Head of caudate nucleus (tissue), 42 donors: ENCODE measurements at regions of chr2 and their contacts with region 1.

Region 1: DNA sequence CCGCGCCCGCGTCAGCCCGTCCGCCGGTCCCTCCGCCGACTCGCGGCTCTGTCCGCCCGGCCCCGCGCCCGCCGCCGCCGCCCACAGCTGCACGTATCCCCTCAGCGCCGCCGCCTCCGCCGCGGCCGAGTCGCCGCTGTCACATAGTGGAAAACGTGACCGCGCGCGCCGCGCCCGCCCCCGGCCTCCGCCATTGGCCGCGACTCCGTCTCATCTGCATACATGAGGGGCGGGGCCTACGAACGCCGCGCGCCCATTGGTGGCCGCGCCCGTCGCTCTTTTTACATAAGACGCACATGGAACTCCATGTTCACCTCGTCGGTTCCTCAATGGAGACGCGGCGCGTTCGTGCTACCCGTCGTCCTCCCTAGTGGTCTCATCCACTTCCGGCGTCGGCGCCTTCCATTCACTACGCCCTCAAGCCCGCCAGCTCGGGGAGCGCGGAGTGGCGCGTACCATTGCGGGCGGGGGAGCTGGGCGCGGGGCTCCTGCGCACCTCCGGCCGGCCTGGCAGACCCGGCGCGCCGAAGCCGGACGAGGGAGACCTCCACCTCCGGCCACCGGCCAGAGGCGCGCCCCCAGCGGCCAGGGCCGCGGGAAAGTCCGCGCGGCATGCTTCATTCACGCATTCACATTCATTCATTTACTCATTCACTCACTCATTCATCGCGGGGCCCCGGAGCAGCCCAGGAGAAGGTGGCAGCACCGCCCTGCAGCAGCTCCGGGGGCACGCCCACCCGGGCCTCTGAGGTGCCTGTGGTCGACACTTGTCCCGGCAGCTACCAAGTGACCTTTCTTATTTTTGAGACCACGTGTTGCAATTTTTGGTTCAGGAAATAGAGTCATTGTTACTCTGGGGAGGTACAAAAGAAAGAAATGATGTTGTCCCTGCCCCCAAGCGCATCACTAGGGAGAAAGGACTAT is 502 bp upstream of the PER2 start:
- DNase-seq: peak; percentile 94 to 100 (median 98)

Region 2: GRCh38 chr2:238203094-238203972 is 85.6 kb before region 1 on chr2 and contains the start of gene ILKAP:
- intact Hi-C with region 1: no loop called
- DNase-seq: peak; percentile 62 to 95 (median 90)

Region 3: DNA sequence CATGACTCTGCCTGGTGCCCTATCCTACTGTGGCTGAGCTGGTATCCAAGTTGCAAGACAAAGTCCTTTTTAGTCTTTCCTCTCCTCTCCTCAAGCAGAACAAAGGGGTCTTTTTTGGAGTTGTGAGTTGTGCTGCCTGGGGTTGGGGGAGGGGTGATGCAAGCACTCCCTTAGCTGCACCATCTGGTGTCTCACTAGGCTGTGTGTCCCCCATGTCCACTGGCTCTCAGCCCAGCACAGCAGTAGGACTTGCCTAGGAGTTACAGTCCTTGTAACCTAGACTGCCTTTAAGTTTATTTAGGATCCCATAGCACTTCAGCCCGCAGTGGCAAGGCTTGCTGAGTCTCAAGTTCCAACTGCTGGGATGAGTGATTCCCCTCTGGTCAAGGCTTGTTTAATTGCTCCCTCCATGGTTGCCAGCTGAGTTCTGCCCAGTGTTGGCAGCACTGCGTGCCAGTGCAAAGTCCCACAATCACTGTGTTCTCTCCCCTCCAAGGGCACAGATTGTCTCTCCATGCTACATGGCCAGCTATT is 72.2 kb before region 1 on chr2:
- intact Hi-C with region 1: no loop called
- DNase-seq: peak; percentile 75 to 95 (median 90)

Region 4: GRCh38 chr2:238320246-238320647 is 31.3 kb after region 1 on chr2 and contains the start of gene TRAF3IP1:
- intact Hi-C with region 1: loop called (anchors 2 kb)
- DNase-seq: peak; percentile 77 to 98 (median 96)